Endothelial cell of umbilical vein (primary cell): ENCODE measurements at regions of chr1 and their contacts with region 1.

Region 1: GRCh38 chr1:45011837-45012638 is at the start of gene UROD:
- DNase-seq: peak; percentile 97
- H3K4me3 ChIP-seq: peak within 1 kb of the TSS; percentile 70 to 94 (median 79)
- H3K27ac ChIP-seq: peak within 1 kb of the TSS; percentile 88
- H3K4me1 ChIP-seq: peaks cover 28% of the 10 kb centered on the region
- H3K27me3 ChIP-seq: no peaks in the 10 kb centered on the region
- CTCF ChIP-seq: no peak
- POLR2A ChIP-seq: peak; percentile 98
- total RNA-seq, gene UROD: 187 and 192 TPM in 2 replicates

Region 2: GRCh38 chr1:44786138-44786840 is 225.7 kb before region 1 on chr1:
- CTCF ChIA-PET with region 1: interaction called, 27 read pairs
- POLR2A ChIA-PET with region 1: no interaction called
- dilution Hi-C with region 1: no loop called
- intact Hi-C with region 1: loop called (anchors 1 kb)
- DNase-seq: peak; percentile 69
- H3K4me3 ChIP-seq: peak overlapping the region in 2 of 3 experiments; percentile 12 to 17
- H3K27ac ChIP-seq: no peak overlapping the region
- H3K4me1 ChIP-seq: peaks cover 10% of the 10 kb centered on the region
- H3K27me3 ChIP-seq: no peaks in the 10 kb centered on the region
- CTCF ChIP-seq: peak; percentile 98 to 99
- POLR2A ChIP-seq: no peak

Region 3: GRCh38 chr1:44819608-44820327 is 192.3 kb before region 1 on chr1:
- CTCF ChIA-PET with region 1: interaction called, 3 read pairs
- POLR2A ChIA-PET with region 1: interaction called, 10 read pairs
- dilution Hi-C with region 1: no loop called
- intact Hi-C with region 1: no loop called
- DNase-seq: peak; percentile 82
- H3K4me3 ChIP-seq: peak overlapping the region; percentile 5 to 62 (median 17)
- H3K27ac ChIP-seq: peak overlapping the region; percentile 91
- H3K4me1 ChIP-seq: peaks cover 10% of the 10 kb centered on the region
- H3K27me3 ChIP-seq: no peaks in the 10 kb centered on the region
- CTCF ChIP-seq: no peak
- POLR2A ChIP-seq: peak; percentile 100

Region 4: GRCh38 chr1:44970317-44970716 is 41.7 kb before region 1 on chr1:
- CTCF ChIA-PET with region 1: no interaction called
- POLR2A ChIA-PET with region 1: no interaction called
- dilution Hi-C with region 1: no loop called
- intact Hi-C with region 1: no loop called
- DNase-seq: peak; percentile 80
- H3K4me3 ChIP-seq: no peak overlapping the region
- H3K27ac ChIP-seq: peak overlapping the region; percentile 56
- H3K4me1 ChIP-seq: peaks cover 35% of the 10 kb centered on the region
- H3K27me3 ChIP-seq: no peaks in the 10 kb centered on the region
- CTCF ChIP-seq: no peak
- POLR2A ChIP-seq: no peak

Region 5: DNA sequence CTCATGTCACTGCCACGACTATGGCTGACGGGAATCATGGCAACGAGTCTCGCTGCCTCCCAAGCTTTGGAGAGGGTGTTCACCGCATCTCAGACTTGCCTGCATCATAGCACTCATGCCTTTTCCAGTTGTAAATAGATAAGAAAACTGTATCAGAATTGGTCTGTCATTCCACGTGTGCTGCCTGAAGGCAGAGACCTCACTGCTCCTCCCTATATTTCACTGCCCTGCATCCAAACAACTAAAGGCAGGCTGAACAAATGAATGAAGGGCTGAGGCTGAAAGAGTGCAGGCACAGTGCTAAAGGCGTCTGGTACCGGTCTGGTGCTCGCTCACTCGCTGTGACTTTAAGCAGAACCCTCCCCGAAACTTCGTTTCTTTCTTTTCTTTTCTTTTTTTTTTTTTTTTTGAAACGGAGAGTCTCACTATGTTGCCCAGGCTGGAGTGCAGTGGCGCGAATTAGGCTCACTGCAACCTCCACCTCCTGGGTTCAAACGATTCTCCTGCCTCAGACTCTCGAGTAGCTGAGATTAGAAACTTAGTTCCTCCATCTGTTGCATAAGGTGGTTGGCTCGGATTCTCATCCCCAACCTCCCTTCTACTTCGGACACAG is 26.2 kb before region 1 on chr1:
- CTCF ChIA-PET with region 1: interaction called, 4 read pairs
- POLR2A ChIA-PET with region 1: interaction called, 3 read pairs
- dilution Hi-C with region 1: no loop called
- intact Hi-C with region 1: loop called (anchors 1 kb)
- DNase-seq: peak; percentile 23
- H3K4me3 ChIP-seq: peak overlapping the region; percentile 42 to 89 (median 67)
- H3K27ac ChIP-seq: peak overlapping the region; percentile 4
- H3K4me1 ChIP-seq: peaks cover 8% of the 10 kb centered on the region
- H3K27me3 ChIP-seq: no peaks in the 10 kb centered on the region
- CTCF ChIP-seq: no peak
- POLR2A ChIP-seq: no peak

Region 6: DNA sequence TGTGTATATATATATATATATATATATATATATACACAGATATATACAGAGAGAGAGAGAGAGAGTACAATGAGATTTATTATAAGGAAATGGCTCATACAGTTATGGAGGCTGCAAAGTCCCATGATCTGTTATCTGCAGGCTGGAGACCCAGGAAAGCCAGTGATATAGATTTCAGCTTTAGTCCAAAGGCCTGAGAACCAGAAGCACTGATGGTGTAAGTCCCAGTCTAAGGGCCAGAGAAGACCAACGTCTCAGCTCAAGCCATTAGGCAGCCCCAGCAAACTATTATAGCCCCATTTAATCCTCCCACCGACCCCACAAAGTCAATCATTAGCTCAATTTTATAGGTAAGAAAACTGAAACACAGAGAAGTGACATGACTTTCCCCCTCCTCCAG is 279.7 kb after region 1 on chr1:
- CTCF ChIA-PET with region 1: interaction called, 556 read pairs
- POLR2A ChIA-PET with region 1: no interaction called
- dilution Hi-C with region 1: no loop called
- intact Hi-C with region 1: no loop called
- DNase-seq: no peak
- H3K4me3 ChIP-seq: no peak overlapping the region
- H3K27ac ChIP-seq: no peak overlapping the region
- H3K4me1 ChIP-seq: no peaks in the 10 kb centered on the region
- H3K27me3 ChIP-seq: no peaks in the 10 kb centered on the region
- CTCF ChIP-seq: no peak
- POLR2A ChIP-seq: no peak

Region 7: GRCh38 chr1:45359882-45360513 is 348.0 kb after region 1 on chr1:
- CTCF ChIA-PET with region 1: interaction called, 28 read pairs
- POLR2A ChIA-PET with region 1: no interaction called
- dilution Hi-C with region 1: no loop called
- intact Hi-C with region 1: no loop called
- DNase-seq: peak; percentile 74
- H3K4me3 ChIP-seq: no peak overlapping the region
- H3K27ac ChIP-seq: no peak overlapping the region
- H3K4me1 ChIP-seq: peaks cover 7% of the 10 kb centered on the region
- H3K27me3 ChIP-seq: no peaks in the 10 kb centered on the region
- CTCF ChIP-seq: peak; percentile 47 to 64
- POLR2A ChIP-seq: no peak

Region 8: GRCh38 chr1:45569962-45570581 is 558.0 kb after region 1 on chr1:
- CTCF ChIA-PET with region 1: interaction called, 8 read pairs
- POLR2A ChIA-PET with region 1: no interaction called
- dilution Hi-C with region 1: no loop called
- intact Hi-C with region 1: loop called (anchors 1 kb)
- DNase-seq: peak; percentile 81
- H3K4me3 ChIP-seq: no peak overlapping the region
- H3K27ac ChIP-seq: no peak overlapping the region
- H3K4me1 ChIP-seq: no peaks in the 10 kb centered on the region
- H3K27me3 ChIP-seq: no peaks in the 10 kb centered on the region
- CTCF ChIP-seq: peak; percentile 89 to 95
- POLR2A ChIP-seq: no peak

Region 9: DNA sequence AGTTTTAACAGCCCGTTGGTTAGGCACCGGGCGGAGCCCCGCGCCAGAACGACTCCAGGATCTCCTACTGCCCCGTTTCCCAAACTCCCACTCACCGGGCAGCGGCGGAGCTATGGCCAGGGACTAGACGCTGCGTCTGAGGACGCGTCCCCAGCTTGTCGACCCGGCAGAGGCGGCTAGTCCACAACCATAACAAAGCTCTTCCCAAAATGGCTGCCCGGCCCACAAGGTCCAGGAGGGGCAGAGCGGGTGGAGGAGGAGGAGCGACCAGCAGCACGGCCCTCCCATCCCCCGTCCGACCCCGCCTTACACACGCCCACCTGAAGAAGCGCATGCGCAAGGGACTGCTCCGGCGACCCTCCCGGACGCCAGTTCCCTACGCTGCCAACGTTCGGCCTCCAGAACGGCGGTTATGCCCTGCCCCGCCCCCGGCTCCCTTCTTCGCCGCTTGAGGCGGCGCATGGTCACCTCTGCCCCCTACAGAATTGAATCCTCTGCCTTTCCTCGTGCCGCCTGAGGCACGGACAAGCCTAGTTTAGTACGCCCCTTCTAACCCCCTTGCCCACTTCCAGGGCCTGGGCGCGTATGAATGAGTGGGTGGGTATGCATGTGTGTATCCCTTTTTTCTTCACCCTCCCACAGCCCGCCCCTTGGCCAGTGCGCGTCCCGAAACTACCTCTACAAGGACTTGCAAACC is 674.4 kb after region 1 on chr1 and contains the start of gene GPBP1L1:
- CTCF ChIA-PET with region 1: no interaction called
- POLR2A ChIA-PET with region 1: no interaction called
- dilution Hi-C with region 1: no loop called
- intact Hi-C with region 1: no loop called
- DNase-seq: peak; percentile 97
- H3K4me3 ChIP-seq: peak within 1 kb of the TSS; percentile 62 to 99 (median 93)
- H3K27ac ChIP-seq: peak within 1 kb of the TSS; percentile 80
- H3K4me1 ChIP-seq: peaks cover 22% of the 10 kb centered on the region
- H3K27me3 ChIP-seq: no peaks in the 10 kb centered on the region
- CTCF ChIP-seq: no peak
- POLR2A ChIP-seq: peak; percentile 90
- total RNA-seq, gene GPBP1L1: 88.8 and 89.7 TPM in 2 replicates